ENCODE measurements at regions of chr17 and their contacts with region 1.

Region 1: DNA sequence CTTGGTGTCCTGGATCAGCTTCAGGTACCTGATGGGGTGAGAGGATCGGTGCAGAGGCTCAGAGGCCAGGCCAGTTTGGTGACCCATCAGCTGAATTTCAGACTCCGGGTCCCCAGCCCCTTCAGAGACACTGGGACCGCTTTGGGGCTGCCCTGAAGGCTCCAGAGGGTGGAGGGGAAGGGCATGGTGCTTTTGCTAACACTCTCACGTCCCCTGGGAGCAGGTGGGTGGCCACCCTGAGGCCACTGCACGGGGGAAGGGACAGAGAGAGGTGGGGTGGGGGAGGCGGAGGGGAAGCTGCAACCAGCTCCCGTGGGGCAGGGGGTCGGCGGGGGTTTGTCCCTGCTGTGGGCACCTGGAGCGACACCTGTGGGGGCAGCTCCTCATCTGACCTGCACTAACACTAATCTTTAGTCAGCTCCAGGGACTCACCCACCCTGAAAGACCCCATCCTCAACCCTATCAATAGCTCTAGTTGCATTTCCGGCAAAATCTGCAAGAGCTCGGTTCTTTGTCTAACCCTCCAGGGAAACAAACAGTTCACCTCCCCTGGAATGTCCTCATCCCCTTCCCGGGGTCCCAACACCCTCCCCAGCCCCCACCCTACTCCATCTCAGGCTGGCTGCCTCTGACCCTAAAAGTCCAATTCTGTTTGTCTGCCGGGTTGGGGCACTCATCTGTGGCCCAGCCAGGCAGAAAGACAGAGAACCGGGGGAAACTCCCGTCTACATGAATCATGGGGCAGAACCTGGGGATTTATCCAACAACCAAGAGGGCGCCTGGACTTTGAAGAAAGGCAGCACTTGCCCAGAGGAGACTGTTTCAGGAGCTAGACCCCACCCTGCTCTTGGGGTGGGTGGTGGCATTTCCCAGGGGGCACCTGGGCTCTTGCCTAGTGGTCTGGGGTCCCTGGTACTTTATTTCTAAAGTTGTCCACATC is 91.9 kb upstream of the CBX4 start:
- DNase-seq: no peak
- H3K4me3 ChIP-seq: no peak overlapping the region
- H3K27ac ChIP-seq: no peak overlapping the region
- H3K4me1 ChIP-seq: peaks cover 7% of the 10 kb centered on the region; the same call in 1 of the 2 replicates
- H3K27me3 ChIP-seq: no peaks in the 10 kb centered on the region
- CTCF ChIP-seq: no peak

Region 2: GRCh38 chr17:79760197-79760906 is 170.8 kb before region 1 on chr17:
- CTCF ChIA-PET with region 1: interaction called, 13 read pairs
- POLR2A ChIA-PET with region 1: no interaction called
- intact Hi-C with region 1: no loop called
- DNase-seq: no peak
- H3K4me3 ChIP-seq: no peak overlapping the region
- H3K27ac ChIP-seq: no peak overlapping the region
- H3K4me1 ChIP-seq: no peaks in the 10 kb centered on the region
- H3K27me3 ChIP-seq: no peaks in the 10 kb centered on the region
- CTCF ChIP-seq: no peak

Region 3: DNA sequence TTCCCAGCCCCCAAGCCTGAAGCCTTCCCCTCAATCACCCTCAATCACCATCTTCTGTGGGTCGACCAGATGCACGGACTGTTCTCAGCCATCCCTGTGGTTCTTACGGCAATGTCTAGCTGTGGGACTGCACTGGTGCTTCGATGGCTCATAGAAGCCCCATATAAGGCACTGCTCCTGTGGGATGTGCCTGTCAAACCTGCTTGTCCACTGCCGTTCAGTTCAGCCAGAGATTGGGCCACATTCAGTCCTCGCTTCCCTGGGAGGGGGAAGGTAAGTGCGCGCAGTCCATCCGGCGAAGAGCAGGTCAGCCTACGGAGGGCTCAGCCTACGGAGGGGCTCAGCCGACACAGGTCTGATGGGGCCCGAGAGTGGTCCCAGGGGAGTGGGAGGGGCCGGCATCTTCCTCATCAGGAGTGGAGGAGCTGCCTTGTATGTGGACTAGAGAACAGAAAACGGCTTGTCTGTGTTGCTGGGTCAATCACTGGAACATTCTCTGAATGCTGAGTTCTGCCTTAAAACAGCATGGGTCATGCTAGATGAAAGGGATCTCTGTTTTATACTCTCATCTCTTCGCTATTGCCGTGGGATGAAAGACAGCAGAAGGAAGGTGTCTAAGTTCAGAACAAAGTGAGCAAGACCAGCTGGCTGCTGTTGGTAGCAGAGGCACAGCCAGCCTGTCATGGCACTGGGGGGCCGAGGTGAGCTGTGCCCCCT is 238.8 kb after region 1 on chr17 and contains the start of gene CARD14:
- CTCF ChIA-PET with region 1: no interaction called
- POLR2A ChIA-PET with region 1: interaction called, 14 read pairs
- intact Hi-C with region 1: no loop called
- DNase-seq: peak; percentile 76 to 83
- H3K4me3 ChIP-seq: peak within 1 kb of the TSS; percentile 50; the same call in 1 of the 2 replicates
- H3K27ac ChIP-seq: no peak within 1 kb of the TSS
- H3K4me1 ChIP-seq: peaks cover 13% of the 10 kb centered on the region
- H3K27me3 ChIP-seq: no peaks in the 10 kb centered on the region
- CTCF ChIP-seq: no peak
- total RNA-seq, gene CARD14: 15.7 and 16.5 TPM in 2 replicates